ENCODE measurements at regions of chr7 and their contacts with region 1.

Region 1: DNA sequence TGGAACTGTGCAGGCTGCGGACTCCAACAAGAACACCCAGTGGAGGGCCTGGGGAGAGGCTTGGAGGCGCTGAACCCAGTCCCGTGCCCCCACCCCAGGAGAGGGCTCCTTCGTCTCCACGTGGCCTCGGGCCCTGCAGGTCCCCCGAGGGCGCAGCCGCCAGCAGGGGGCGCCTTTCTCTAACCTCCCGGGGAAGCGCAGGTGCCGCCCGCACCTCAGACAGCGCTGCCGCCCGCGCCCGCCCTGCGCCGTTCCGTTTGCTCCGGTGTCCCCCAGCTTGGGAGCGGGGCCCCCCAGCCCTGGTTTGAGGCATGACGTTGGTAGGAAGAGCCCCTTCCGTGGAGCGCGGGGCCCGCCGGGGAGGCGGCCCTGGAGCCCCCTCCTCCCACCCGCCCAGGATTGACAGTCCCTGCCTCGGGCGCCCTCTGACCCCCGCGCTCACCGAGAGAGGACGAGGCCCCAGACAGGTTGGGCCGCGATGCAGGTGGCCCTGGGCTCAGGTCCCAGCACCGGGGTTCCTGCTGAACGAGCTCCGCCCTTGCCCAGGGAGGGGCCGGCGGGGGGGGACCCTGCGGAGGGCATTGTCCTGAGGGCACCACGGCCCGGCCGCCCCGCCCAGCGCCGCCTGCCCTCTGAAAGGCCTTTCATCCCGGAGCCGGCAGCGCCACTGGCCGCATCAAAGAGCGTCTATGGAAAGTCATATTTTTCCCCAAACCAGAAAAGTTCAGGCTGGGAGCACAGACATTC is 42.8 kb downstream of the FOXL3 start:
- DNase-seq: peak; percentile 89
- ATAC-seq: peak; percentile 80

Region 2: DNA sequence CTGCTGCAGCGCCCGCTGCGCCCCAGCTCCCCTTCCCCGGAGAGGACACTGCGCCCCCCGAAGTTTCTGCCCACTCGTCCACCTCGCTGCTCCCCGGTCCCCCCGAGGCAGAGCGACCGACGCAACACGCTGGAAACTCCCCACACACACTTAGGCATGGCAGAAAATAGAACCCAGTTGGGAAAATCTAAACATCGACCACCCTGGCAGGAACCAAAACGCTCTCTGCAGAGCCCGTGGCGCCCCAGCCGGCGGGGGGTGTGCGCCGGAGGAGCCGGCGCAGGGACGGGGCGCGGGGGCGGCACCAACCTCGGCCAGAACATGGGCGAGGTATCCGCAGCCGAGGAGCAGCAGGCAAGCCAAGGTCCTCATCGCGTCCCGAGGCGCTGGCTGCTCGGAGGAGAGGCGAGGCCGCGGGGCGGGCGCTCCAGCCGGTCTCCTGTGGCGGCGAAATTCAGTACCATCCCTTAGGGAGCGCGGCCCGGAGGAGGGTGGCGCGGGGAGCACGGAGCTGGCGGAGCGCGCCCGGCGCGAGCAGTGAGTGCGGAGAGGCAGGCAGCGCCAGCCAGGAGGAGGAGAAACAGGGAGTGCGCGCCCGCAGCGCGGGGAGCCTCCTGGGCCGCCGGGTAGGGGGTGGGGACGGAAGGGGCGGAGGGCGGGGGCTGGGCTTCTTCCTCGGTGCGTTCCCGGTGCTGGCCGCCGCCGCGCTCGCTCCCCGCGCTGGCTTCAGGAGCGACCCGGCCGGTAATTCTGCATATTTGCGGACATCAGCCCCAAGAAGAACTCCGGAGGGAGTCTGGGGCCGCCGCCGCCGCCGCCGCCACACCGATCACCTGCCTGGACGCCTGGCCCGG is 186.0 kb after region 1 on chr7:
- intact Hi-C with region 1: loop called (anchors 10 kb)
- DNase-seq: peak; percentile 87
- ATAC-seq: peak; percentile 69

Region 3: DNA sequence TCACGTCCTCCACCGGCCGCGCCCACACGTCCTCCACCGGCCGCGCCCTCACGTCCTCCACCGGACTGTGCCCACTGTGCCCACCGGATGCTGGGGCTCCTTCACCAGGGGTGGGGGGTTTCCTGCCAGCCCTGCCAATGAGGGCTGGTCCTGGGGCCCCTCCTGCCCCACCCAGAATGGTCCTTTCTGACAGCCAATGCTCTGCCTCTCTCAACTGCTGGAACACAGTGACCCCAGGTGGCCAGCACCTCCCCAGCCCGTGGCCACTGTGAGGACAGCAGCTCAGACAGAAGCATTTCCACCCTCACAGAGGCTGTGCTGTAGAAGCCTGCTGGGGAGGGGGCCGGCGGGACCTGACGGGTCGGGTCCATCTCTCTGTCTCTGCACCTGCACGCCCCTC is 303.6 kb after region 1 on chr7:
- intact Hi-C with region 1: loop called (anchors 5 kb)
- DNase-seq: no peak
- ATAC-seq: peak; percentile 39

Measured in sciatic nerve (tissue), 2 donors.